GM10248 (cell line): ENCODE measurements at regions of chr3 and their contacts with region 1.

Region 1: GRCh38 chr3:184786280-184786941 is 25.6 kb upstream of the VPS8 start:
- DNase-seq: no peak
- CTCF ChIP-seq: no peak

Region 2: DNA sequence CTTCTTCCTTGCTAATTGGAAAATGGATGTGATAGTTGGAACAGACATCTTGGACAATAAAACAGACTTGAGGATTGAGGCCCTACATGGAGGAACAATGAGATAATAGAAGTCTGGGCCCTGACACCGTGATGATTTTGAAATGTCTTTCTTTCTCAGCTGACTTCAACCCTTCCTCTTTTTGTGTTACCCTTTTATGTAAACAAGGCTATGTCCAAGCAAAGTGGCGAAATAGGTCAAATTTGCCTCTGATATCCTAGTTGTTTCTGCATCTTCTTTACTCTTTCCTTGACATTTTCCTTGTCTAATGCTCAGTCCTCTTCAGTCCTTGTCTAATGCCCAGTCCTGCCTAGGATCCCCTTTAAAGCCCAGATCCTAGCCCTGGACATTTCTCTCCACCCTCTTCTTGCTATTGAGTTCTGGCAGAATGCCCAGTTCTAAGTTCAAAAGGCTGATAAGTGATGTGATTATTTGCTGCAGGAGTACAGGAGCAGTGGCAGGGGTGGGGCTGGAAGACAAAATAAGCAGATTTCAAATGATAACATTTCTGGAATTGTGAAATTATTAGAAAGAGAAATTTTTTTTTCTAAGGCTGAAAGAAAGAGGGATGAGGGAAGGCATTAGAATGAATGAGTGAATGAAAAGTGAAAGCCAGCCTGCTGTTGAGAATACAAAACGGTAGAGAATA is 19.1 kb after region 1 on chr3:
- CTCF ChIA-PET with region 1: interaction called, 19 read pairs
- POLR2A ChIA-PET with region 1: no interaction called
- DNase-seq: no peak
- CTCF ChIP-seq: no peak